K562 (cell line): ENCODE measurements at regions of chr5 and their contacts with region 1.

Region 1: DNA sequence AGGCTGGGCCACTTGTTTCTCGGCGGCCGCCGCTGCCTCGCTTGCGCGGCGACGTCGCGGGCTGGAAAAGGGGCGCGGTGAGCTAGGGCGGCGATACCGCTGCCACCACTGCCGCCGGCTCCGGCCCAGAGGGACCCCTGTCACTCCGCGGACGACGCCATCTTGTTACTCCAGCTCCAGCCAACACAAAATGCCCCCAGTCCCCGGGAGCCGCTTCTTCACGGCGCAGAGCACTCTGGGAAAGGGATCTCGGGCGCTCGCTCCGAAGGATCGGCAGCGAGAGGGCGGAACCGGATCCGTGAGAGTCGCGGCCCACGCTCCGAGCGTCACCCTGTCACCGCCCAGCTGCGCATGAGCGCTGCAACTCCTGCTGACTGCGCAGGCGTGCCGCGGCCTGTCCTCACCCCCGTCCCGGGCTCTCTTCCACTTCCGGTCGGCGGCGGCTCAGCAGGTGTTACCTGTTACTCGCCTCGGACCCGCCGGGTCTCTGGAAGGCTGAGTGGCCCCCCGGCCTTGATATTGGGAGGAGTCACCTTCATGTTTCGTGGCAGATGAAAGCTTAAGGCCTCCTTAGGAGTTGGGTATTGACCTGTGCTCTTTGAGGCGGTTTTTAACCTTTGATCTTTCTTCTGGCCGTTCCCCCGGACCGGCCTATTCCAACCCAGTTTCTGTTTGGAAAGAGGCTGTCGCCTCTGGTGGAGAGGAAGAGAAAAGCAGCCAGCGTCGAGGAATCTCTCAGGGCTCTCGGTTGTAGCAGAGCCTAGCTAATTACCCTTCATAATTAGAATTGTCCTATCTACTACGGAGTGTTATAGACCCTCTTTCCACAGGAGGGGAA is at the start of gene CSNK1A1:
- DNase-seq: peak; percentile 99 to 100 (median 99)
- ATAC-seq: peak; percentile 91
- H3K4me3 ChIP-seq: peak within 1 kb of the TSS; percentile 97
- H3K27ac ChIP-seq: peak within 1 kb of the TSS; percentile 82
- H3K4me1 ChIP-seq: peaks cover 4 to 10% of the 10 kb centered on the region in 2 experiments; a peak in 4 of 5 replicates
- H3K27me3 ChIP-seq: no peaks in the 10 kb centered on the region
- CTCF ChIP-seq: peak; percentile 77 to 89 (median 88)
- EP300 ChIP-seq: 0 out of 2 replicates have a peak, but pooled peaks have one; percentile 39
- POLR2A ChIP-seq: peak; percentile 95
- RAD21 ChIP-seq: peak; percentile 67 to 68; a peak in 3 of 4 replicates
- polyA plus RNA-seq, gene CSNK1A1: 49.1 to 63.3 TPM

Region 2: DNA sequence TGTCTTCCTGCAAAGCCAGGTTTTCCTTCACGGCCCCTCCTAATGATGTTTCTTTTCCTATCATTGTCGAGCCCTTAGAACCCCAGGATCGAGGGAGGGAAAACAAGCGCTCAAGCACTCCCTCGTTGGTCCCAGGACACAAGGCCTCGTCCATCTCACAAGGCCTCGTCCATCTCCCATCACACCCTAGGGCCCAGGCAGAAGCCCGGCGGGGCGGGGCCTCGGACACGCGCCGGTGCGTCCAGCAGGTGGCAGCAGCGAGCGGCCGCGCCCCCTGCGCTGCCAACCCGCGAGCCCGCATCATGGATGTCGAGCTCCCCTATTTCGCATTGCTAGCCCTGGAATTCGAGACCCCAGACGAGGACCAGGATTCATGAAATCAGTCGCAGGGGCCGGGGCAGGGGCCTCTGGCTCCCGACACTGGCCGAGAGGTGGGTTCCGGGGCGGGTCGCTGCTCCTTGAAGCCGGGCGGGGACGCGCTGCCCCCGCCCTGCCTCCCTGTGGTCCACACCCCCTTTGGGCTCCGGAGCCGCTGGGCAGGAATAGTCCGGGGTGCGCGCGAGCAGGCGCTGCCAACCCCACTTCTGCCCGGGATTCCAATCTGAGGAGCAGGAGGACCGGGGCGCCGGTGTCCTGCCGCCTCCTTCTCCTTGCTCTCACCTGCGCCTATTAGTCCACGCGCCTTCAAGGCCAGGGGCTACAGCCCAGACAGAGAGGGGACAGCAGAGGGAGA is 410.0 kb before region 1 on chr5 and contains the start of gene ABLIM3:
- CTCF ChIA-PET with region 1: no interaction called
- POLR2A ChIA-PET with region 1: no interaction called
- in situ Hi-C with region 1: loop called (anchors 25 kb)
- intact Hi-C with region 1: no loop called
- DNase-seq: peak; percentile 72 to 93 (median 90)
- ATAC-seq: peak; percentile 99
- H3K4me3 ChIP-seq: peak within 1 kb of the TSS; percentile 45
- H3K27ac ChIP-seq: no peak within 1 kb of the TSS
- H3K4me1 ChIP-seq: peaks cover 0 to 11% of the 10 kb centered on the region in 2 experiments; a peak in 2 of 5 replicates
- H3K27me3 ChIP-seq: peaks cover 2 to 16% of the 10 kb centered on the region in 2 experiments; a peak in 2 of 5 replicates
- CTCF ChIP-seq: peak; percentile 86 to 94 (median 92)
- EP300 ChIP-seq: no peak
- POLR2A ChIP-seq: no peak
- RAD21 ChIP-seq: peak; percentile 83 to 85
- polyA plus RNA-seq, gene ABLIM3: 0.08 to 0.10 TPM

Region 3: GRCh38 chr5:149367249-149367971 is 184.0 kb before region 1 on chr5:
- CTCF ChIA-PET with region 1: no interaction called
- POLR2A ChIA-PET with region 1: interaction called, 3 read pairs
- in situ Hi-C with region 1: loop called (anchors 5 kb)
- intact Hi-C with region 1: no loop called
- DNase-seq: peak; percentile 74 to 90 (median 81)
- ATAC-seq: peak; percentile 90
- H3K4me3 ChIP-seq: no peak overlapping the region
- H3K27ac ChIP-seq: no peak overlapping the region
- H3K4me1 ChIP-seq: peaks cover 23 to 25% of the 10 kb centered on the region in 2 experiments; a peak in 4 of 5 replicates
- H3K27me3 ChIP-seq: no peaks in the 10 kb centered on the region
- CTCF ChIP-seq: peak; percentile 96 to 97 (median 96)
- EP300 ChIP-seq: no peak
- POLR2A ChIP-seq: no peak
- RAD21 ChIP-seq: peak; percentile 62 to 85

Region 4: DNA sequence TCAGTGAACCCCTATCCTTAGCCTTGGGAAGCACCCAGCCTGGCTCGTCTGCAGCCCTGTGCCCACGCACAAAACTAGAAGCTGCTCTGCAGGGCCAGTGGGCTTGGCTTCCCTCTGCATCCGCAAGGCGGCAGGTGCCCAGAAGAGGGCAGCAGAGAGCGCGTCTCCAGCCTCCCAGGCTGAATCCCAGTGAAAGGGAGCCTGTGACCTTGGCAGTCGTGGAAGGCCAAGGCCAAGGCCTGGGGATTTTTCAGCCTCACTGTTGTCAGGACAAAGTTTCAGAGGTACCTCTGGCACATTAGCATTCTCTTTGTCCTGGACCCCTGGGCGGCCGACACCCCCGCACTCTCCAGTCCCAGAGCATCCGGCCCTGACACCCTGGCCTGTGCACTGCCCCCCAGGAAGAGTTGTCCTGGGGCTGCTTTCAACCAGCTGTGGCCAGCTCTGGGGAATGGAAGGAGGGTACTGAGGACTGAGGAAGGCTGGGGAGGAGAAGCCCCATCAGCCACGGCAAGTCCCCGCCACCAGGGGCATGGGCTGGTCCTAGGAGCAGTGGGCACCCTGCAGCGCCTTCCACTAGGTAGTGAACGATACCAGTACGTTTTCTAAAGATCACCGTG is 108.7 kb before region 1 on chr5:
- CTCF ChIA-PET with region 1: interaction called, 19 read pairs
- POLR2A ChIA-PET with region 1: interaction called, 13 read pairs
- in situ Hi-C with region 1: loop called (anchors 5 kb)
- intact Hi-C with region 1: no loop called
- DNase-seq: peak; percentile 76 to 86 (median 78)
- ATAC-seq: peak; percentile 83
- H3K4me3 ChIP-seq: no peak overlapping the region
- H3K27ac ChIP-seq: peak overlapping the region; percentile 18; the same call in 1 of the 3 replicates
- H3K4me1 ChIP-seq: peaks cover 32 to 44% of the 10 kb centered on the region in 2 experiments
- H3K27me3 ChIP-seq: no peaks in the 10 kb centered on the region
- CTCF ChIP-seq: peak; percentile 91 to 96 (median 92)
- EP300 ChIP-seq: no peak
- POLR2A ChIP-seq: no peak
- RAD21 ChIP-seq: peak; percentile 71 to 93

Region 5: DNA sequence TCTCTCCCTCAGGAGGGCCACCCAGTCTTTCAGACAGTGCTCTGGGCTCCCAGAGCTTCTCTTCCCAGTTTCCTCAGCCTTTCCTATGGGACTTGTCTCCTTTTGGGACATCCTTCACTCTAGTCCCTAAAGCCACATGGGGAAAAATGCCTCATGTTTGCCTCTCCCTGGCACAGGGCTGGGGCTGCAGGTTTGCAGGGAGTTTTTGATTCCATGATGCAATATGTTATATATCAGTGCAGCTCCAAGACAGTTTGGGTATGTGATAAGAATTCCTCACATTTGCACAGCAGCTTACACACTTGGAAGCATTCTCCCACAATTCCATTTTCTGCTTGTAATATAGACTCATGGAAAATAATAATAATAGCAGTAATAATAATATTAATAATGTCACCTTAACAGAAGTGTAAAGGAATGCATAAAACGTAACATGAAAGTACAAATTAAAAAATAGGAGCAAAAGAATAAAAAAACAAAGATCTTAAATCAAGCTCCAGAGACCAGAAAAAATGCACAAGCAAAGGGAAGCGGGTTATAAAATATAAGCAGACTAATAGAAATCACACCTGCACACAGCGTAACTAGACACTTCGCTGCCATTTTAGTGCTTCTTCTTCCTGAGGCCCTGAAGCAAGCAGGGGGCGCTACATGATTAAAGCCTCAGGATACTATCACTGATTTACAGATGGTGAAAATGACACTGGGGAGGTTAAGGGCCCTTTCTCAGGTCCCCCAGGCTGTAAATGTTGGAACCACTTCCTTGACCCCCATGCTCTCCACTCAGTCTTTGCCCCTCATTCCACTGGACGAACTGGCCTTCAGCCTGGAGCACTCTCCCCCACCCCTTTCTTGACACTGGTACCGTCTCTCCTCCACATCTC is 102.3 kb before region 1 on chr5:
- CTCF ChIA-PET with region 1: interaction called, 3 read pairs
- POLR2A ChIA-PET with region 1: interaction called, 12 read pairs
- in situ Hi-C with region 1: loop called (anchors 5 kb)
- intact Hi-C with region 1: loop called (anchors 1 kb)
- DNase-seq: peak; percentile 48 to 82 (median 62)
- ATAC-seq: peak; percentile 66
- H3K4me3 ChIP-seq: no peak overlapping the region
- H3K27ac ChIP-seq: no peak overlapping the region
- H3K4me1 ChIP-seq: peaks cover 48 to 62% of the 10 kb centered on the region in 2 experiments
- H3K27me3 ChIP-seq: no peaks in the 10 kb centered on the region
- CTCF ChIP-seq: peak; percentile 70 to 86 (median 78)
- EP300 ChIP-seq: no peak; the same call in 1 of the 2 replicates
- POLR2A ChIP-seq: no peak
- RAD21 ChIP-seq: peak; percentile 81 to 90

Region 6: DNA sequence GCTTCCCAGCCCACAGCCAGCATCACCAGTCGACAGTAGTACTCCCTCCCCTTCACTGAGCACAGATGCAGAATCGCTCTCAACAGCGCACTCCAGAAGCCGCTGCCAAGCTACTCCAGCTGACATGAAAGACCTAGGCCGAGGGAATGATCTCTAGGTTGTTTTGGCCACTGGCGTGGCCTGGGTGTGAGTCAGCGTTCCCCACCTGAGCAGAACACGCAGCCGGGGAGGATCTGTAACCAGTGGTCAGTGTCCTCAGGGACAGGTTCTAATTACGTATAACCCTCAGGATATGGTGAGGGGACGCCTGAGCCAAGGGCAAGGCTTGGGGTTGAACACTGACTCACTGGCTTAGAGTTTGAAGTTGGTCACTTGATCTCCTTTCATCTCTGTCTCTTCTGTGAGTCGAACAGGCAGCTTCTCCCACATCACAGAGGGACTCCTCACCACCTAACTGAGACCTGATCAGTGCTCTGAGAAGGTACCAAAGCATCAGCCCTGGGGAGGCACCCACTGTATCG is 95.5 kb before region 1 on chr5:
- CTCF ChIA-PET with region 1: no interaction called
- POLR2A ChIA-PET with region 1: interaction called, 10 read pairs
- in situ Hi-C with region 1: no loop called
- intact Hi-C with region 1: no loop called
- DNase-seq: peak; percentile 60 to 84 (median 66)
- ATAC-seq: peak; percentile 60
- H3K4me3 ChIP-seq: no peak overlapping the region
- H3K27ac ChIP-seq: peak overlapping the region; percentile 88
- H3K4me1 ChIP-seq: peaks cover 38 to 53% of the 10 kb centered on the region in 2 experiments
- H3K27me3 ChIP-seq: no peaks in the 10 kb centered on the region
- CTCF ChIP-seq: no peak
- EP300 ChIP-seq: peak; percentile 6; the same call in 1 of the 2 replicates
- POLR2A ChIP-seq: no peak
- RAD21 ChIP-seq: no peak

Region 7: GRCh38 chr5:149517461-149518122 is 33.8 kb before region 1 on chr5:
- CTCF ChIA-PET with region 1: no interaction called
- POLR2A ChIA-PET with region 1: interaction called, 12 read pairs
- in situ Hi-C with region 1: no loop called
- intact Hi-C with region 1: no loop called
- DNase-seq: no peak
- ATAC-seq: peak; percentile 19; the same call in 1 of the 3 replicates
- H3K4me3 ChIP-seq: no peak overlapping the region
- H3K27ac ChIP-seq: no peak overlapping the region
- H3K4me1 ChIP-seq: peaks cover 0 to 15% of the 10 kb centered on the region in 2 experiments; a peak in 3 of 5 replicates
- H3K27me3 ChIP-seq: no peaks in the 10 kb centered on the region
- CTCF ChIP-seq: no peak
- EP300 ChIP-seq: no peak
- POLR2A ChIP-seq: no peak
- RAD21 ChIP-seq: no peak

Region 8: GRCh38 chr5:149680810-149681221 is 129.4 kb after region 1 on chr5:
- CTCF ChIA-PET with region 1: no interaction called
- POLR2A ChIA-PET with region 1: no interaction called
- in situ Hi-C with region 1: no loop called
- intact Hi-C with region 1: no loop called
- DNase-seq: no peak
- ATAC-seq: peak; percentile 50
- H3K4me3 ChIP-seq: no peak overlapping the region
- H3K27ac ChIP-seq: no peak overlapping the region; the same call in 2 of the 3 replicates
- H3K4me1 ChIP-seq: peaks cover 2 to 27% of the 10 kb centered on the region in 2 experiments; a peak in 3 of 5 replicates
- H3K27me3 ChIP-seq: no peaks in the 10 kb centered on the region; a peak in 1 of 5 replicates
- CTCF ChIP-seq: no peak
- EP300 ChIP-seq: no peak
- POLR2A ChIP-seq: no peak
- RAD21 ChIP-seq: no peak